ENCODE measurements at regions of chr19 and their contacts with region 1.

Region 1: DNA sequence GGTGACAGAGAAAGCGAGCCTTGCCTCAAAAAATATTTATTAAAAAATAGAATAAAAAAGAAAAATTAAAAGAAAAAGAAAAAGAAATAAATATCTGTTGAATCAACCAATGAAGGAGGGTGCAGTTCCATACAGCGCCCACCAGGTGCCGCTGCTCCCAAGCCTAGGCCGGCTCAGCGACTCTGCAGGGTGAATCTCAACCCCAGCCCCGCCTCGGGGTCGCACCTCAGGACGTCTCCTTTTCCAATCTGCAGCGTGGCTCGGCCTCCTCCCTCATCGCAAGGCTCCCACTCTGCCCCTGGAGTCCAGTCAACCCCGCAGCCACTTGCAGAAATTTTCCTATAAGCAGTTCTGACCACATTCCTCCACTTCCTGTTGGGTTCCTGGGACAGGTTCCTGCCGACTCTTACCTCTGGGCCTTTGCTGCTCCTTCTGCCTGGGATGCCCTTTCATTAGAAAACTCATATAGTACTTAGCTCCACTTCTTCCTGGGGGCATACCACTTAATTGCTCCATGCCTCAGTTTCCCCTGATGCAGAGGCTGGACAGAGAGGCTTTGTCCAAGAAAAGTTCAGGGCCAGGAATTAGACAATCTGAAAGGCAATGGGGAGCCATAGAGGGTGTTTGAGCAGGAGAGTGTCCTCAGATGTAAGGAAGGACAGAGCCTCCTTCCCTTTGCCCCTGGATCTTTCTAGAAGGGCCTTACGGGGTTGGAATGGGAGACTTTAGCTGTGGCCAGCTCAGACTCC is 24.3 kb downstream of the NFILZ start:
- DNase-seq: peak in 1 of 2 donors; percentile 27
- H3K4me3 ChIP-seq: no peak overlapping the region
- H3K27ac ChIP-seq: no peak overlapping the region
- H3K4me1 ChIP-seq: peaks cover 0 to 19% (median 8%) of the 10 kb centered on the region in 4 donors
- H3K27me3 ChIP-seq: peaks cover 0 to 28% of the 10 kb centered on the region in 2 donors
- CTCF ChIP-seq: peak; percentile 77 to 99

Region 2: GRCh38 chr19:8697671-8698432 is 43.1 kb after region 1 on chr19:
- intact Hi-C with region 1: no loop called
- DNase-seq: no peak
- H3K4me3 ChIP-seq: no peak overlapping the region
- H3K27ac ChIP-seq: no peak overlapping the region
- H3K4me1 ChIP-seq: no peaks in the 10 kb centered on the region
- H3K27me3 ChIP-seq: peaks cover 0 to 58% of the 10 kb centered on the region in 2 donors
- CTCF ChIP-seq: no peak

Region 3: DNA sequence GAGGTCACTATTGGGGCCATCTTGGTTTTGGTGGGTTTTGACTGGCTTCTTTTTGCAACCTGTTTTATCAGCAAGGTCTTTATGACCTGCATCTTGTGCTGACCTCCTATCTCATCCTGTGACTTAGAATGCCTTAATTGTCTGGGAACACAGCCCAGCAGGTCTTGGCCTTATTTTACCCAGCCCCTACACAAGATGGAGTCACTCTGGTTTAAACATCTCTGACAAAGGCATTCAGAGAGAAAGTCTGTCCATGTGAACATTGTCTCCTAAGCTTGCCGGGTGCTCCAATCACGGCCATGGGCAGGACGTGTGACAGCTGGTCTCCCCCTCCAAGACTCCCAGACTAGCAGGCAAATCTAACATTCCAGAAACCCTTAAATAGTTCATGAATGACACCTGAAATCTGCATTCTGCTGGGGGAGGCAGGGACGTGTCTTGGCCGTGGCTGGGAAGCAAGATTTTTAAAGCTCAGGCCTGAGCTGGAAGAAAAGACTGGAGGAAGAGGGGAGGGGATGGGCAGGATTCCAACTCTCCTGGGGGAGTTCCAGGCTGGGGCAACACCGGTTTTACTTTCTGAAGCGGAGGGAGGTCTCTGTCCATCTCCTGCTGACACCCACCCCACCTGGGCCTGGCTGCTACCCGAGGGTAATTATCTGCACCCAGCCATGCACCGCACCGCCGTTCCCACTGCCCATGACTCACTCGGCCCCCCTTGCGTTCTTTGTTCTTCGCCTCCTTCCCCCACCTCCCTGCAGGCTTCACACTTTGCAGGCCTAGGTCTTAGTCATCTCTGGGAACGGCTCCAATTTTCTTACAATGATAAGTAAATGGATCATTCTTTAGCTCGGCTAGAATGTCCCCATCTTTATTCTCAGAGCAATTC is 420.5 kb after region 1 on chr19:
- intact Hi-C with region 1: loop called (anchors 5 kb)
- DNase-seq: peak in 1 of 2 donors; percentile 27
- H3K4me3 ChIP-seq: no peak overlapping the region
- H3K27ac ChIP-seq: no peak overlapping the region
- H3K4me1 ChIP-seq: peaks cover 0 to 14% (median 2%) of the 10 kb centered on the region in 4 donors
- H3K27me3 ChIP-seq: no peaks in the 10 kb centered on the region
- CTCF ChIP-seq: no peak

Measured in tibial artery (tissue), 4 donors.